ENCODE measurements at regions of chr20 and their contacts with region 1.

Region 1: GRCh38 chr20:32902456-32903420 is 44.0 kb downstream of the EFCAB8 start:
- DNase-seq: peak; percentile 74
- H3K4me3 ChIP-seq: no peak overlapping the region
- H3K27ac ChIP-seq: no peak overlapping the region
- H3K4me1 ChIP-seq: peaks cover 0 to 3% (median 0%) of the 10 kb centered on the region in 4 donors
- H3K27me3 ChIP-seq: no peaks in the 10 kb centered on the region
- CTCF ChIP-seq: peak; percentile 33 to 87 (median 78)
- EP300 ChIP-seq: no peak
- POLR2A ChIP-seq: no peak

Region 2: GRCh38 chr20:32574296-32575226 is 328.2 kb before region 1 on chr20:
- intact Hi-C with region 1: no loop called
- DNase-seq: no peak
- H3K4me3 ChIP-seq: no peak overlapping the region
- H3K27ac ChIP-seq: peak overlapping the region in 1 of 4 donors; percentile 45
- H3K4me1 ChIP-seq: peaks cover 0 to 14% (median 7%) of the 10 kb centered on the region in 4 donors
- H3K27me3 ChIP-seq: no peaks in the 10 kb centered on the region
- CTCF ChIP-seq: no peak
- EP300 ChIP-seq: no peak
- POLR2A ChIP-seq: no peak

Region 3: DNA sequence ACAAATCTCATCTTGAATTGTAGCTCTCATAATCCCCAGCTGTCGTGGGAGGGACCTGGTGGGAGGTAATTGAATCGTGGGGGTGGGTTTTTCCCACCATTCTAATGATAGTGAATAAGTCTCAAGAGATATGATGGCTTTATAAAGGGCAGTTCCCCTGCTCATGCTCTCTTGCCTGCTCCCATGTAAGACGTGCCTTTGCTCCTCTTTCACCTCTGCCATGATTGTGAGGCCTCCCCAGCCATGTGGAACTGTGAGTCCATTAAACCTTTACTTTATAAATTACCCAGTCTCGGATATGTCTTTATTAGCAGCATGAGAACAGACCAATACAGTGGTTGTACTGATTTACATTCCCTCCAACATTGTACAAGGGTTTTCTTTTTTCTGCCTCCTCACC is 31.8 kb after region 1 on chr20:
- intact Hi-C with region 1: no loop called
- DNase-seq: no peak
- H3K4me3 ChIP-seq: no peak overlapping the region
- H3K27ac ChIP-seq: no peak overlapping the region
- H3K4me1 ChIP-seq: no peaks in the 10 kb centered on the region
- H3K27me3 ChIP-seq: no peaks in the 10 kb centered on the region
- CTCF ChIP-seq: no peak
- EP300 ChIP-seq: no peak
- POLR2A ChIP-seq: no peak

Region 4: GRCh38 chr20:33097001-33097400 is 194.3 kb after region 1 on chr20:
- intact Hi-C with region 1: loop called (anchors 10 kb)
- DNase-seq: no peak
- H3K4me3 ChIP-seq: no peak overlapping the region
- H3K27ac ChIP-seq: no peak overlapping the region
- H3K4me1 ChIP-seq: no peaks in the 10 kb centered on the region
- H3K27me3 ChIP-seq: no peaks in the 10 kb centered on the region
- CTCF ChIP-seq: no peak
- EP300 ChIP-seq: no peak
- POLR2A ChIP-seq: no peak

Region 5: GRCh38 chr20:33299111-33299603 is 396.4 kb after region 1 on chr20:
- intact Hi-C with region 1: loop called (anchors 1 kb)
- DNase-seq: peak; percentile 70
- H3K4me3 ChIP-seq: no peak overlapping the region
- H3K27ac ChIP-seq: no peak overlapping the region
- H3K4me1 ChIP-seq: peaks cover 0 to 5% (median 0%) of the 10 kb centered on the region in 4 donors
- H3K27me3 ChIP-seq: peaks cover 0 to 13% (median 0%) of the 10 kb centered on the region in 3 donors
- CTCF ChIP-seq: peak; percentile 59 to 91 (median 76)
- EP300 ChIP-seq: no peak
- POLR2A ChIP-seq: no peak

Measured in sigmoid colon (tissue), 7 donors.